Activated T-helper 1 cell treated with anti-CD3 and anti-CD28 coated beads, Interleukin-12 subunit alpha, Interleukin-12 subunit beta, Interleukin-2, Interleukin-4 antibody, amounts not matched to agents 30 ng/mL and 10 ng/mL and 1 ng/mL, durations not matched to agents 14 hours and 24 hours and 36 hours (primary cell): ENCODE measurements at regions of chr6 and their contacts with region 1.

Region 1: DNA sequence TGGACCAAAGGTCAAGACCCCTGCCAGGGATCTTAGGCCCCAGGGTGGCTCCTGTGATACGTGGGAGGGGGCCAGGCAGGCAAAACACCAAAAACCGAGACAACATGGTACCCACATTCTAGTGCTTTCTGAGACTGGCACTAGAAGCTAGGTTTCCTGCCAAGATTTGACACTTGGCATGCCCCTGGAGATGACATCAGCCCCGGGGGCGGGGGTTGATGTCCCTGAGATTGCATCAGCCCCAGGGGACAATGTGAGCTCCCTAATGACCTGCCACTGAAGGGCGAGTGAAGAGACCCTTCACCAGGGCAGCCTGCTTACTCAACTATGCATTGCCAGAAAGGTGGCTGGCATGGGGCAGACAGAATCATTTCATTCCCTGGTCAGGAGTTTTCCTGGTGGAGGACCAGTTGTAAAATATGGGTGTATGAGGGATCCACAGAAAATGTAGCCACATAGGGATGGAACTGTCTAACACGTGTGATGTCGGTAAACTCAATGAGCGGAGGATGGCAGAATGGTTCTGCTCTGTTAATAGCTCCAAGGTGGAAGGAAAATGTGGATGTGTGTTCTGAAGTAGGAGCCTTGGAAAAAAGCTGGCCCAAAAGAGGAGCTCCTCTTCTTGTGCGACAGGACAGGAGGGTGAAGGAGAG is 219.7 kb downstream of the UNC5CL start:
- DNase-seq: no peak
- H3K4me3 Mint-ChIP-seq: no peak overlapping the region
- H3K27ac Mint-ChIP-seq: no peak overlapping the region
- H3K4me1 Mint-ChIP-seq: no peaks in the 10 kb centered on the region
- H3K27me3 Mint-ChIP-seq: peaks cover 9% of the 10 kb centered on the region

Region 2: GRCh38 chr6:40550202-40551101 is 268.9 kb before region 1 on chr6:
- intact Hi-C with region 1: loop called (anchors 10 kb)
- DNase-seq: peak; percentile 5
- H3K4me3 Mint-ChIP-seq: no peak overlapping the region
- H3K27ac Mint-ChIP-seq: no peak overlapping the region
- H3K4me1 Mint-ChIP-seq: no peaks in the 10 kb centered on the region
- H3K27me3 Mint-ChIP-seq: peaks cover 11% of the 10 kb centered on the region

Region 3: GRCh38 chr6:40695112-40695511 is 124.2 kb before region 1 on chr6:
- intact Hi-C with region 1: no loop called
- DNase-seq: no peak
- H3K4me3 Mint-ChIP-seq: no peak overlapping the region
- H3K27ac Mint-ChIP-seq: no peak overlapping the region
- H3K4me1 Mint-ChIP-seq: no peaks in the 10 kb centered on the region
- H3K27me3 Mint-ChIP-seq: no peaks in the 10 kb centered on the region